Caco-2 (cell line): ENCODE measurements at regions of chr11 and their contacts with region 1.

Region 1: DNA sequence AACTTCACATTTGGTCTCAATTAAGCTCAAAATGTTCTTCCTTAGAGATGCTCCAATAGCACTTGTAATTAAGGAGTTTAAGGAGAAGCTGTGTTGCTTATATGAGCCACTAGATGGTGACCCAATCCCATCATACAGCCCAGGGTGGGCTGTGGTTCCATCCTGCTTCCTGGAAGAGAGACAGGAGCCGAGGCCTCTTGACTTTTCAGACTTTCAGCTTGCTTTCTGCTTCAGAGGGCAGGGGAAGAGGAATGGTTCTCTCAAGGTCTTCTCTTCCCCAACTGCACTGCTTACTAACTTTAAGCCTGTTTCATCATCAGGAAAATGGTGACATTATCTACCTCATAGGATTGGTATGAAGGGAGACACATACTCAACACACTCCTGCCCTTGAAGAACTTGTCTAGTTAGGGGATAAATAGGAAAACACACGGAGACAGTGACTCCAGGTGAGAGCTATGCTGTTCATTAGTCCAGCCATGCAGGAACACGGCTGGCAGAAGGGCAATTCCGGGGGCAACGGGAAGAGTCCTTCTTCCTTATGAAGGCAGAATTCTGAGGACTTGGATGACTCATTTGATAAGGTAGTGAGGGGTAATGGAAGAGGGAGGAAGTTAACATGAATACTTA is 20.1 kb downstream of the TMEM218 start:
- DNase-seq: peak; percentile 71 to 75
- H3K4me3 ChIP-seq: no peak overlapping the region
- H3K4me3 Mint-ChIP-seq: no peak overlapping the region
- H3K27ac Mint-ChIP-seq: peak overlapping the region; percentile 48
- H3K4me1 ChIP-seq: peaks cover 29% of the 10 kb centered on the region
- H3K4me1 Mint-ChIP-seq: peaks cover 30% of the 10 kb centered on the region
- H3K27me3 ChIP-seq: no peaks in the 10 kb centered on the region
- H3K27me3 Mint-ChIP-seq: no peaks in the 10 kb centered on the region
- CTCF ChIP-seq: peak; percentile 87 to 89

Region 2: DNA sequence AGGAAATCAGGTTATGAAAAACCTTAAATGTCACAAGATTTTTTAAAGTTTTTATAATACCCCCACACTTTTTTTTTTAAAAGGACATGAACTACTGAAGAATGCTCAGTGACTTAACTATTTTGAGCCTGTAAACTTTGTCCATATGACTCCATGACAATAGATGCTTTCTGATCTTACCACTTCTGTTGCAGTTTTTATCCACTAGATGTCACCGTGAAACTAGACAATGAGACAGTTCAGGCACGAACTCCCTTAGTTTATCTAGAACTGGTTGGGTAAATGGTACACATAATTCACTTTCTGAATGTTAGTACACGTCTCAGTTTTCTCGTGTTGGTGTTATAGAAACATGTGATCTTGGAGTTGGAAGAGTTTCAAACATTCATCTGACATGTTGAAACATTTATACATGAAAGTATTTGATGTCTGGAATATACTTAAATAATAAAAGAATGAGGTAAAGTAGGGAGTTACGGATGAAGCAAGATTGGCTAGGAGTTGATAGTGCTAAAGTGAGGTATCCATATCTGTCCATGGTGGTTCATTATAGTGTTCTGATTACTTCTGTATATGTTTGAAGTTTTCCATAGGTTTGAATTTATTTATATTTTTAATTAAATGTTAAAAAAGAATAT is 129.3 kb before region 1 on chr11:
- CTCF ChIA-PET with region 1: no interaction called
- POLR2A ChIA-PET with region 1: no interaction called
- intact Hi-C with region 1: loop called (anchors 1 kb)
- DNase-seq: peak in 1 of 2 experiments; percentile 76
- H3K4me3 ChIP-seq: no peak overlapping the region
- H3K4me3 Mint-ChIP-seq: no peak overlapping the region
- H3K27ac Mint-ChIP-seq: no peak overlapping the region
- H3K4me1 ChIP-seq: no peaks in the 10 kb centered on the region
- H3K4me1 Mint-ChIP-seq: no peaks in the 10 kb centered on the region
- H3K27me3 ChIP-seq: no peaks in the 10 kb centered on the region
- H3K27me3 Mint-ChIP-seq: peaks cover 4% of the 10 kb centered on the region
- CTCF ChIP-seq: peak; percentile 86 to 90

Region 3: DNA sequence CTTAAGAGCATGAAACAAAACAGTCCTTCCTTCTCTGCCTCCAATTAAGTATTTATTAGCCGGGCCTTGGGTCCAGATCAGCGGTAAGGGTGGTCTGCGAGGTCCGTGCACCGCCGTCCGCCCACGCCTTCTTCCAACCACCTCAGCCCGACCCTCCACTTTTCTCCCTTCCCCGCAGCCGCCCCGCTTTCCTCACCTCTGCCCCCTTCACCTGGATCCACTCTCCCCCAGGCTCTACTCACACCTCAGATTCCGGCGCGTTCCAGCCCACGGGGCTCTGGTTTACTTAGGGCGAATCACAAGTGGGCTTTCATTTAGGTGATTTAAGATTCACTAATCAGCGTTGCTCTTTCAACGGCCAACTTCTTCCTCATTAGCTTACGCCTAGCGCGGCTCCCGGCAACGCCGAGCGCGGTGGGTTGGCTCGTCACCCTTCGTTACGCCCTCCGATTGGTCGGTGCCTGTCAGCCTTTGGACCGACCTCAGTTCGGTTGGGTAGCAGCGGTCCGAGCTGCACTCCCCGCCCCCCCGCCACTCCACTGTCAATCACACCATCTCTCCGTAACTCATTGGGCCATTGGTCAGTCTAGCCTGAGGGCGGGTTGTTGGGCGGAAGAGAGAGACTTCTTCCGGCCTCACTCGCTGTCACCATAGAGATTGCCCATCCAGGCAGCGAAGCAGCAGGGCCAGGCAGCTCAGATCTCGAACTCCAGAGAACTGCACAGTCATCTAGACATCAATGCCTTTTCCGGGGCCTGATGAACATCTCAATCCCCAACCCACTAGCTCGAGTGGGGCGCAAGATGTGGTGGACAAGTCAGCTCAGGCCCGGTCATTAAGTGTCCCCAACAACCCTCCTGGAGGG is 20.2 kb after region 1 on chr11 and contains the start of gene TMEM218:
- CTCF ChIA-PET with region 1: interaction called, 20 read pairs
- POLR2A ChIA-PET with region 1: interaction called, 21 read pairs
- intact Hi-C with region 1: loop called (anchors 1 kb)
- DNase-seq: peak; percentile 100
- H3K4me3 ChIP-seq: peak within 1 kb of the TSS; percentile 50
- H3K4me3 Mint-ChIP-seq: peak within 1 kb of the TSS; percentile 88
- H3K27ac Mint-ChIP-seq: peak within 1 kb of the TSS; percentile 90
- H3K4me1 ChIP-seq: peaks cover 6% of the 10 kb centered on the region; the same call in 1 of the 2 replicates
- H3K4me1 Mint-ChIP-seq: no peaks in the 10 kb centered on the region
- H3K27me3 ChIP-seq: no peaks in the 10 kb centered on the region
- H3K27me3 Mint-ChIP-seq: no peaks in the 10 kb centered on the region
- CTCF ChIP-seq: no peak
- total RNA-seq, gene TMEM218: 15.5 and 20.3 TPM in 2 replicates

Region 4: DNA sequence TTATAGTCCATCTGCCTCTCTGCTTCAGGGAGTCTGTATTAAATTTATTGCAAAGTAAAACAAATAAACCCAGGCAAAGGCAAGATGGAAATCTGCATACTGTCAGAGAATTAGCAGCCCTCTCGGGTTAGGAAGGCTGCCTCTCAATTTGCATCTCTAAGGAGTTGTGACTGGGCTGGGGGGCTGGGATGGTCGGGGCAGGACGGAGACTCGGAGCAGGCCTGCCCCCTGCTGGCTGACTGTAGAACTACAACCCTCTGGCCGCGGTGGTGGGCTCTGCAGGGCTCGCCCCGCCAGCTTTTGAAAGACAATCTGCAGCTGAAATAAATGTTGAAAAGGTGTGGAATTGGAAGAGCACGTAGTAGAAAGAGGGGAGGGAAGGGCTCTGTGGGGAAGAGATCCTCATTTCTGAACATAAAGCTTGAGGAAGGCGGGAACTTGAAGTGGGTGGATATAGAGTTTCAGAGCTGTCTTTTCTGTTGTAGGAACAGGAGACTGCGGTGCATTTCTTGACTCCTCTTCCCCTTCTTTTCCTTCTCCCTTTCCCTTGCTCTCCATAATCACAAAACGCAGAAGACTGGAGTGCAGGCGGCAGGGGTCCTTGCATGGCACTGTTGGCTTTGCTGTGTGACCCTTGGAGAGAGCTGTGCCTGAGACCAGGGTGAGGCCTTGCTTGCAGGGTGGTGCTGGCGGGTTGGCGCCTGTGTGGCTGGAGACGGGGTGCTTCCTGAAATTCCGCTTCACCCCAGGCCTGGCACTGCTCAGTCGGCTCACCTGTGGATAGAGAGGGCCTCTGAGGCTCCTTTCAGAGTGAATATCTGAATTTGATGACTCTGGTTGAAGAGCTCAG is 50.5 kb after region 1 on chr11:
- CTCF ChIA-PET with region 1: interaction called, 117 read pairs
- POLR2A ChIA-PET with region 1: no interaction called
- intact Hi-C with region 1: loop called (anchors 1 kb)
- DNase-seq: peak; percentile 56 to 82
- H3K4me3 ChIP-seq: no peak overlapping the region
- H3K4me3 Mint-ChIP-seq: no peak overlapping the region
- H3K27ac Mint-ChIP-seq: no peak overlapping the region
- H3K4me1 ChIP-seq: 0 out of 2 replicates have a peak, but pooled peaks cover 5% of the 10 kb centered on the region
- H3K4me1 Mint-ChIP-seq: no peaks in the 10 kb centered on the region
- H3K27me3 ChIP-seq: no peaks in the 10 kb centered on the region
- H3K27me3 Mint-ChIP-seq: peaks cover 7% of the 10 kb centered on the region
- CTCF ChIP-seq: peak; percentile 98 to 100

Region 5: DNA sequence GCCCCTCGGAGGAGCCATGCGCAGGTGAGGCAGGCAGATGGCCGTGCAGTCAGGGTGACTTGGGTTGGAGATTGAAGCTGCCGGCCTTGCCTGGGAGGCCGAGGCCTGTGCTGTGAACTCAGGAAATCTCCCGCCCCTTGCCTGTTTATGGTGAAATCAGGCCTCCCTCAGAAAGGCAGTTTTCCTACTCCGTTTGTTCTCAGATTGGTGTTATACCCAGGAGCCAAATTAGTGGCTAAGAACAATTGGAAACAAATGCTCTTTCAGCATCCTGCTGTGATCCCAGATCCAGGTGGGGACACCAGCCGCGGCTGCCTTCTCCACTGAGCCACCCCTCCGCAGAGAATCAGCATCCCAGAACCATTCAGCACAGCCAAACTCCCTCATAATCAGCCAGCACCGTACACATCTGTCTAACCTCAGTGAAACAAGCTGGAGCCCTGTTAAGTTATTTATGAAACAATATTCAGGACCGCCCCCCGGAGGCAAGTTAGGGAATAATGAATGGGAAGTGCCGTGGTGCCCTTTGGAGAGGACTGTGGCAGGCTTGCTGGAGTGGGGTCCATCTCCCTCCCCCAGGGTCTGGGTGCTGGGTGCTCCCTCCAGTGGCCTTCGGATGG is 133.1 kb after region 1 on chr11:
- CTCF ChIA-PET with region 1: interaction called, 11 read pairs
- POLR2A ChIA-PET with region 1: no interaction called
- intact Hi-C with region 1: loop called (anchors 1 kb)
- DNase-seq: peak in 1 of 2 experiments; percentile 46
- H3K4me3 ChIP-seq: no peak overlapping the region
- H3K4me3 Mint-ChIP-seq: no peak overlapping the region
- H3K27ac Mint-ChIP-seq: no peak overlapping the region
- H3K4me1 ChIP-seq: no peaks in the 10 kb centered on the region
- H3K4me1 Mint-ChIP-seq: no peaks in the 10 kb centered on the region
- H3K27me3 ChIP-seq: peaks cover 2% of the 10 kb centered on the region
- H3K27me3 Mint-ChIP-seq: peaks cover 27% of the 10 kb centered on the region
- CTCF ChIP-seq: peak in 1 of 2 experiments; percentile 38

Region 6: GRCh38 chr11:125404776-125405435 is 313.5 kb after region 1 on chr11:
- CTCF ChIA-PET with region 1: interaction called, 16 read pairs
- POLR2A ChIA-PET with region 1: no interaction called
- intact Hi-C with region 1: loop called (anchors 1 kb)
- DNase-seq: peak; percentile 74 to 90
- H3K4me3 ChIP-seq: no peak overlapping the region
- H3K4me3 Mint-ChIP-seq: no peak overlapping the region
- H3K27ac Mint-ChIP-seq: no peak overlapping the region
- H3K4me1 ChIP-seq: no peaks in the 10 kb centered on the region
- H3K4me1 Mint-ChIP-seq: no peaks in the 10 kb centered on the region
- H3K27me3 ChIP-seq: peaks cover 5% of the 10 kb centered on the region
- H3K27me3 Mint-ChIP-seq: peaks cover 48% of the 10 kb centered on the region
- CTCF ChIP-seq: peak; percentile 99

Region 7: DNA sequence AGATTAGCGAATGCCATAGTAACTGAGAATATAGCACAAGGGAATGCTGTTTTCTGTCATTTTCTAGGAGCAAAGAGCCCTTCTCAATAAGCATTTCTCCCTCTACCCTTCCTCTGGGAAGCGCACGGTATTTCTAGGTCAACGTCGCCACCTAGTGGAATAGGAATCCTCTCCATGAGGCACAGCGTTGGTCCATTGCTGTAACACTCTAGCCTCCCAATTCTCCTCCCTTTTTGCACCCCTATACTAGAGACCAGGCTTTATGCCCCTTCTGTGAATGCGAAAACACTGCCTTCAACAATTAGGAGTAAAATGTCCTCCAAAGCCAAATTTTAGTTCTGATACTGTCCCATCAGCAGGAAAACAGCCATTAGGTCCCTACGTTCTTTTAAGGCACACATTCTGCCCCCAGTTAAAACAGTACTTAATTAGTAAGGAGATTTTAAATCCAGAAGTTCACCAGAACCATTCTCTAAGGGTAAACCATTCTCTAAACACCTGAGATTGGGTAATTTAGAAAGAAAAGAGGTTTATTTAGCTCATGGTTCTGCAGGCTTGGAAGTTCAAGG is 783.3 kb after region 1 on chr11:
- CTCF ChIA-PET with region 1: no interaction called
- POLR2A ChIA-PET with region 1: no interaction called
- intact Hi-C with region 1: loop called (anchors 1 kb)
- DNase-seq: peak; percentile 78 to 82
- H3K4me3 ChIP-seq: no peak overlapping the region
- H3K4me3 Mint-ChIP-seq: no peak overlapping the region
- H3K27ac Mint-ChIP-seq: no peak overlapping the region
- H3K4me1 ChIP-seq: no peaks in the 10 kb centered on the region
- H3K4me1 Mint-ChIP-seq: peaks cover 7% of the 10 kb centered on the region
- H3K27me3 ChIP-seq: no peaks in the 10 kb centered on the region
- H3K27me3 Mint-ChIP-seq: peaks cover 3% of the 10 kb centered on the region
- CTCF ChIP-seq: peak; percentile 93 to 97